Activated naive CD4-positive, alpha-beta T cell treated with anti-CD3 and anti-CD28 coated beads for 36 hours (primary cell): ENCODE measurements at regions of chr12 and their contacts with region 1.

Region 1: DNA sequence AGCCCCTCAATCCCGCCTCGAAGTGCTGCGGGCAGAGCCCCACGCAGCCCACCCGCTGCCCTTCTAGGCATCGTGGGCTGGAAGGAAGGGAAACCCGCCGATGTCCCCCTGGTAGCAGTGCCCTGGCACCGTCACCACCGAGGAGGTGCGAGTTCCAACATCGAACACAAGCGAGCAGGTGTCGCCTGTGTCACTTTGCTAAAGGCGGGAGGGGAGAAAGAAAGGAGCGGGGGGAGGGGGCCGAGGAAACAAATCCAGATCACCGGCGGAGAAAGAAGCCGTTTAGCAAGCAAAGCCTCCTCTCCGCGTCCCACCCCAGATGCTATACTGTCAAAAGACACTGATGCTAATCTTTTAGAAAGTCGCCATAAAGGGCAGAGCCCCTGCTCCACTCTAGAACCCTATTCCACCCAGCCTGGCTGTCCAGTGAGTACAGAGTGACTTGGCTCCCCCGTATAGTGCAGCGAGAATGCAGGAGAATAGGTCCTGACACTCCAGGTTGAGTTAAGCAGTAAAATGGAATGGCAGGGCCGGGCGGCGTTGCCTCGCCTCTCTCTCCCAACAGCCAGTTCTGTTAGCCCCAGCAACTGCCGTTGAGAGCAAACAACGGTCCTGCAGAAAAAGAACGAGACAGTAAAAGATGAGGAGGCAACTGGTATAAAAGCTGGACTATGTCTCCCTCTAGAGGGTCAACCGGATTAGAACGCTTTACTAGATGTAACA is 67.9 kb upstream of the USP15 start:
- DNase-seq: peak; percentile 65
- H3K4me3 Mint-ChIP-seq: peak overlapping the region; percentile 78
- H3K27ac Mint-ChIP-seq: no peak overlapping the region
- H3K4me1 Mint-ChIP-seq: peaks cover 14% of the 10 kb centered on the region
- H3K27me3 Mint-ChIP-seq: peaks cover 36% of the 10 kb centered on the region

Region 2: GRCh38 chr12:61254225-61254624 is 938.1 kb before region 1 on chr12:
- CTCF ChIA-PET with region 1: no interaction called
- intact Hi-C with region 1: no loop called
- DNase-seq: no peak
- H3K4me3 Mint-ChIP-seq: no peak overlapping the region
- H3K27ac Mint-ChIP-seq: no peak overlapping the region
- H3K4me1 Mint-ChIP-seq: no peaks in the 10 kb centered on the region
- H3K27me3 Mint-ChIP-seq: no peaks in the 10 kb centered on the region

Region 3: DNA sequence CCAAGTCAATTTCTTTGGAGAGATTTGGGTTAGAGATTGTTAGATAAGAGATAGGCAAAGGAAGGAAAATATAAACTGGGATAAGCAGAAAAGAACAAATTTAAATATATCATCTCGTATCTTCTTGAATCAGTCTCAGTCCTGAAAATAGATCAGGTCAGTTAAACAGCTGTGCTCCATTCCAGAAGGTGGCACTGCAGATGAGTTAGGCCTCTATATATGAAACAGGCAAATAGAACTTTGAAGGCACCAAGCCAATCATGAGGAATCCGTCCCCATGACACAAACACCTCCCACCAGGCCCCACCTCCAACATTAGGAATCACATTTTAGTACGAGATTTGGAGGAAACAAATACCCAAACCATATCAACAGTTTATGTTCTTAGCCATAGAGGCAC is 537.6 kb before region 1 on chr12:
- CTCF ChIA-PET with region 1: no interaction called
- intact Hi-C with region 1: loop called (anchors 10 kb)
- DNase-seq: peak; percentile 7
- H3K4me3 Mint-ChIP-seq: no peak overlapping the region
- H3K27ac Mint-ChIP-seq: no peak overlapping the region
- H3K4me1 Mint-ChIP-seq: no peaks in the 10 kb centered on the region
- H3K27me3 Mint-ChIP-seq: no peaks in the 10 kb centered on the region

Region 4: GRCh38 chr12:61870658-61871484 is 321.5 kb before region 1 on chr12:
- CTCF ChIA-PET with region 1: no interaction called
- intact Hi-C with region 1: loop called (anchors 10 kb)
- DNase-seq: peak; percentile 30
- H3K4me3 Mint-ChIP-seq: no peak overlapping the region
- H3K27ac Mint-ChIP-seq: no peak overlapping the region
- H3K4me1 Mint-ChIP-seq: no peaks in the 10 kb centered on the region
- H3K27me3 Mint-ChIP-seq: no peaks in the 10 kb centered on the region

Region 5: GRCh38 chr12:62123721-62124203 is 68.6 kb before region 1 on chr12:
- CTCF ChIA-PET with region 1: interaction called, 5 read pairs
- intact Hi-C with region 1: loop called (anchors 1 kb)
- DNase-seq: peak; percentile 61
- H3K4me3 Mint-ChIP-seq: no peak overlapping the region
- H3K27ac Mint-ChIP-seq: no peak overlapping the region
- H3K4me1 Mint-ChIP-seq: peaks cover 2% of the 10 kb centered on the region
- H3K27me3 Mint-ChIP-seq: peaks cover 6% of the 10 kb centered on the region

Region 6: GRCh38 chr12:62247281-62248045 is 55.1 kb after region 1 on chr12:
- CTCF ChIA-PET with region 1: no interaction called
- intact Hi-C with region 1: no loop called
- DNase-seq: no peak
- H3K4me3 Mint-ChIP-seq: no peak overlapping the region
- H3K27ac Mint-ChIP-seq: no peak overlapping the region
- H3K4me1 Mint-ChIP-seq: peaks cover 27% of the 10 kb centered on the region
- H3K27me3 Mint-ChIP-seq: no peaks in the 10 kb centered on the region